ENCODE measurements at regions of chr21 and their contacts with region 1.

Region 1: GRCh38 chr21:32597205-32597604 is 11.9 kb upstream of the TCP10L start:
- DNase-seq: peak; percentile 97
- H3K4me3 ChIP-seq: no peak overlapping the region
- H3K27ac ChIP-seq: peak overlapping the region; percentile 84
- H3K4me1 ChIP-seq: peaks cover 29% of the 10 kb centered on the region
- H3K27me3 ChIP-seq: no peaks in the 10 kb centered on the region
- CTCF ChIP-seq: no peak

Region 2: DNA sequence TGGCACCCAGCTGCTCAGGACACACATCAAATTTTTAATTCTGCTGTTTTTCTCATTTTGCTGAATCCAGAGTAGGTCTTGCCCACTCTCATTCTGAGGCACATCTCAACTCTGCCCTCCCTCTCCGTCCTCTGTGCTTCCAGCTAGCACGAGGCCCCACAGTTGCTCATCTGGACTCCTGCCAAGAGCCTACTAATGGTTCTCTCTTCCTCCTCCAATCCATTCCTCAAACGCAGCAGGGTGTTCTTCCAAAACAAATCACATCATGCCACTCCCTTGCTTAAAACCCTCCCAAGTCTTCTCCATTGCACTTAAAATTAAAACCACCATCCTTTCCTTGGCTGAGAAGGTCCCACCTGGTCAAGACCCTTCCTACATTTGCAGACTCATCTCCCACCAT is 815.5 kb before region 1 on chr21:
- CTCF ChIA-PET with region 1: interaction called, 35 read pairs
- dilution Hi-C with region 1: no loop called
- in situ Hi-C with region 1: no loop called
- intact Hi-C with region 1: loop called (anchors 5 kb)
- DNase-seq: no peak
- H3K4me3 ChIP-seq: no peak overlapping the region
- H3K27ac ChIP-seq: no peak overlapping the region
- H3K4me1 ChIP-seq: no peaks in the 10 kb centered on the region
- H3K27me3 ChIP-seq: no peaks in the 10 kb centered on the region
- CTCF ChIP-seq: no peak

Region 3: GRCh38 chr21:32278518-32279376 is 318.5 kb before region 1 on chr21 and contains the start of gene MIS18A:
- CTCF ChIA-PET with region 1: interaction called, 13 read pairs
- dilution Hi-C with region 1: no loop called
- in situ Hi-C with region 1: no loop called
- intact Hi-C with region 1: loop called (anchors 5 kb)
- DNase-seq: peak; percentile 98
- H3K4me3 ChIP-seq: peak within 1 kb of the TSS; percentile 94 to 98 (median 94)
- H3K27ac ChIP-seq: peak within 1 kb of the TSS; percentile 74
- H3K4me1 ChIP-seq: peaks cover 16% of the 10 kb centered on the region
- H3K27me3 ChIP-seq: no peaks in the 10 kb centered on the region
- CTCF ChIP-seq: no peak
- total RNA-seq, gene MIS18A: 4.3 to 14.8 TPM

Region 4: DNA sequence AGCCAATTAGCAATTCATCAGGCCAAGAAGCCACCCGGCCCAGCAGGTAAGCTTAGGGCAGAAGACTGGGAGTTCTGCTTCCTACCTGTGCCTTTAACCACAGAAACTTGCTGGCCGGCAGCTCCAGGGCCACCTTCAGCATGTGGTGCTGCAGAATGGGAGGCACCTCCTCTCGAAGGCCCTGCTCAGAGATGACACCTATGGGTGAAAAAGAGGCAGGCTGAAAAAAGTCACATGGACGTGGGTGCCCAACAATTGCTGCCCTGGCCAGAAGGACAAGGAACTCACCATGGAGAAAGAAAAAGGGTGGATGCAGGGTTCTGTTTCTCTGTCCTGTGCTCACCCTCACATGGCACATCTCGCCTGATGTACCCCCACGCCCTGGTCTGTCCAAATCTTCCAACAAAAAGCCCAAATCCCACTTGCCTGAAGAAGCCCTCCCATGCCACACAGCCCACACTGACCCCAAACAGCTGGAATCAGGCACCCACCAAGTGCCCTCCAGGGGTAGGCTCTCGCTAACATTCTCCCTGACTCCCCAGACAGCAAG is 237.4 kb before region 1 on chr21:
- CTCF ChIA-PET with region 1: interaction called, 21 read pairs
- dilution Hi-C with region 1: no loop called
- in situ Hi-C with region 1: no loop called
- intact Hi-C with region 1: no loop called
- DNase-seq: peak; percentile 36
- H3K4me3 ChIP-seq: no peak overlapping the region
- H3K27ac ChIP-seq: no peak overlapping the region
- H3K4me1 ChIP-seq: peaks cover 11% of the 10 kb centered on the region
- H3K27me3 ChIP-seq: no peaks in the 10 kb centered on the region
- CTCF ChIP-seq: peak; percentile 28 to 49

Region 5: GRCh38 chr21:32371913-32372314 is 225.3 kb before region 1 on chr21:
- CTCF ChIA-PET with region 1: no interaction called
- dilution Hi-C with region 1: no loop called
- in situ Hi-C with region 1: no loop called
- intact Hi-C with region 1: no loop called
- DNase-seq: peak; percentile 73
- H3K4me3 ChIP-seq: no peak overlapping the region
- H3K27ac ChIP-seq: peak overlapping the region; percentile 38
- H3K4me1 ChIP-seq: peaks cover 6% of the 10 kb centered on the region
- H3K27me3 ChIP-seq: no peaks in the 10 kb centered on the region
- CTCF ChIP-seq: no peak

Region 6: DNA sequence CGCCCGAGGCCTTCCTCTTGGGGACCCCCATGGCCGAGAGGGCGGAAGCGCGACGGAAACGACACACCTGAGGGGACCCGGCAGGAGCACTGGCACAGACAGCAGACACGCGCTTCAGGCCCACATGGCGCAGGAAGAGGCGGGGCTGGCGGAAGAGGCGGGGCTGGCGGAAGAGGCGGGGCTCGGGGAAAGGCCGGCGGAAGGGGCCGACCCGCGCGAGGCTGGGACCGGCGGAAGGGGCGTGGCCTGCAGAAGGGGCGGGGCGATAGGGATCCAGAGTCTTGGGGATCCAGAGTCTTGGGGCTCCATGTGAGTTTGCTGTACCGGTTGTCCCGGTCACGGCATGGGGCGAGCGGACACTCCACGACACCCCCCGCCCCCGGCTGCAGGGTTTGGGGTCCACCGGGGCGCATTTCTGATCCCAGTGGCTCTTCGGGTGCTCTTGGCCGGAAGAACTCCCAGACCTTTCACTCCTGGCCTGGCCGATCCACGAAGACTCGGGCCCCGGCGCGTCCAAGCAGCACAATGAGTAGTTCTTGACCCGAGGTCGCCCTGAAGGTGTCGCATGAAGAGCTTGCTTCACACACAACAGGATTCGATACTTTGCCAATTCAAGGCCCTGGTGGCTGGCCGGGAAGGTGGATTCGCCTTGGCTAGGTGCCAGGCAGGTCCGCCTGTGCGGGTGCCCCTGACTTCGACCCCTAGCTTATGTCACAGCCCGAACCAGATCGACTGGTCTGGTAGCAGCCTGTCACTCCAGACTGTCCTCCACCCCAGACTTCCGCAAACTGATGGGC is 204.1 kb before region 1 on chr21 and contains the start of gene URB1:
- CTCF ChIA-PET with region 1: interaction called, 7 read pairs
- dilution Hi-C with region 1: no loop called
- in situ Hi-C with region 1: no loop called
- intact Hi-C with region 1: loop called (anchors 2 kb)
- DNase-seq: peak; percentile 80
- H3K4me3 ChIP-seq: peak within 1 kb of the TSS; percentile 87 to 97 (median 94)
- H3K27ac ChIP-seq: peak within 1 kb of the TSS; percentile 57
- H3K4me1 ChIP-seq: peaks cover 28% of the 10 kb centered on the region
- H3K27me3 ChIP-seq: no peaks in the 10 kb centered on the region
- CTCF ChIP-seq: peak in 1 of 2 donors; percentile 1
- total RNA-seq, gene URB1: 32.2 to 36.4 TPM

Region 7: DNA sequence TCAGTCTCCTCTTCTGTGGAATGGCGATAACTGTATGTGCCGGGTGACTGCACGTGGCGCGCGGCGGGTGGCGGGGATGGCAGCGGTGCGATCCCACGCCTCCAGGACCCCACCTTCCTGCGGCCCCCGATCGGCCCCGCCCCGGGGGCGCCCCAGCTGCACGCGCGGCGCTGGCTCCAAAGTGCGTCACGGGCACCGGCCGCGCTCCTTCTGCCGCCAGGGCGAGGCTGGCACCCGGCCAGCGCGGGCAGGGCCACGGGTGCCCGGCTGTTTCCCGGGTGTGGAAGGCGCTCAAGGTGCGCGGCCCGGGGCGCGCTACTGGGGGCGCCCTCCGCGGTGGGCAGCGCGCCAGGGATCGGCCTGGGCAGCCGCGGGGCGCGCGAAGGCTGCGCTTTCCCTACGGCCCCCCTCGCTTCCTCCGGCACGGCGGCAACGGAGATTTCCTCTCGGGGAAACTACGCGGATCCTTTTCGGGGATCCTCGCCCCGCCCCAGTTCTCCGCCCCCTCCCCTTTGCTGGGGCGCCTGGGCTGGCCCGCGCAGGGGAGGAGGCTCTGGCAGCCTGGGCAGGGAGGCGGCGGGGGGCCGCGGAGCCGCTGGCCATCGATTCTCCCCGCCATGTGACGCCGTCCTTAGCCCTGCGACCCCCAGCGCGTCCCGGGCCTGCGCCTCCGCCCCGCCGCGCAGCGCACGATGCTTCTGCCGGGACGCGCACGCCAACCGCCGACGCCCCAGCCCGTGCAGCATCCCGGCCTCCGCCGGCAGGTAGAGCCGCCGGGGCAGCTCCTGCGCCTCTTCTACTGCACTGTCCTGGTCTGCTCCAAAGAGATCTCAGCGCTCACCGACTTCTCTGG is 184.8 kb before region 1 on chr21 and contains the start of gene EVA1C:
- CTCF ChIA-PET with region 1: interaction called, 4 read pairs
- dilution Hi-C with region 1: no loop called
- in situ Hi-C with region 1: loop called (anchors 5 kb)
- intact Hi-C with region 1: loop called (anchors 1 kb)
- DNase-seq: peak; percentile 69
- H3K4me3 ChIP-seq: peak within 1 kb of the TSS; percentile 68 to 80 (median 69)
- H3K27ac ChIP-seq: peak within 1 kb of the TSS; percentile 86
- H3K4me1 ChIP-seq: peaks cover 33% of the 10 kb centered on the region
- H3K27me3 ChIP-seq: no peaks in the 10 kb centered on the region
- CTCF ChIP-seq: peak; percentile 3 to 20
- total RNA-seq, gene EVA1C: 11.7 to 28.4 TPM

Measured in mammary epithelial cell (primary cell).